Dorsolateral prefrontal cortex (tissue), 120 donors: ENCODE measurements at regions of chr19 and their contacts with region 1.

Region 1: GRCh38 chr19:14136509-14137281 is at the start of gene ASF1B:
- DNase-seq: peak; percentile 96 to 100 (median 99)
- H3K4me3 ChIP-seq: peak within 1 kb of the TSS; percentile 56 to 96 (median 83)
- H3K27ac ChIP-seq: peak within 1 kb of the TSS in 58 of 59 donors; percentile 40 to 96 (median 88)
- H3K27me3 ChIP-seq: no peaks in the 10 kb centered on the region
- CTCF ChIP-seq: peak; percentile 88 to 100 (median 98)
- total RNA-seq, gene ASF1B: 0.22 to 2.4 (median 0.63) TPM in 55 of 120 experiments, not detected in the others

Region 2: DNA sequence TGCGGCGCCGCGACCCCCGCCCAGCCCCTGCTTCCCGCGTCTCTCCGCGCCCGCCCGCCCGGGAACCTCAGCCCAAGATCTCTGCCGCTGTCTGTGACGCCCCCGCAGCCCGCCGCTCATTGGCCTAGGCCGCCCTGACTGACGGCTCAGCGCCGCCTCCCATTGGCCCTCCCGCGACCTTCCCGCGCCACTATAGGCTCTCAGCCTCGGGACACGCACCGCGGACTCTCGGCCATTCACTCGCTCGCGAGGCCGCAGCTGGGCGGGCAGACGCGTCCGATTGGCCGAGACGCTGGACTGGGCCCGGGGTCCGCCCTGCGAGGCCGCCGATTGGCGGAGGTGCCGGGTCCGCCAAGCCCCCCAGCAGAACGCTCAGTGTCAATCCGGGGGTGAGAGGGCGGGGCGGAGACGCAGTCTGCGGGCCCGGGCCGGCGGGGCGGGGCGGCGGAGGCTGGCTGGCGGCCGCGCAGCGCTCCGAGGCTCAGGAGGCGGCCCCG is 19.0 kb before region 1 on chr19 and contains the start of gene PRKACA:
- intact Hi-C with region 1: loop called (anchors 1 kb)
- DNase-seq: peak; percentile 98 to 100 (median 100)
- H3K4me3 ChIP-seq: peak within 1 kb of the TSS; percentile 65 to 94 (median 84)
- H3K27ac ChIP-seq: peak within 1 kb of the TSS; percentile 94 to 100 (median 99)
- H3K27me3 ChIP-seq: no peaks in the 10 kb centered on the region
- CTCF ChIP-seq: no peak
- total RNA-seq, gene PRKACA: 87.9 to 222 (median 163) TPM

Region 3: GRCh38 chr19:14405758-14406644 is 269.3 kb after region 1 on chr19:
- intact Hi-C with region 1: loop called (anchors 5 kb)
- DNase-seq: peak; percentile 83 to 95 (median 89)
- H3K4me3 ChIP-seq: peak overlapping the region; percentile 16 to 69 (median 51)
- H3K27ac ChIP-seq: peak overlapping the region in 56 of 59 donors; percentile 14 to 89 (median 74)
- H3K27me3 ChIP-seq: no peaks in the 10 kb centered on the region
- CTCF ChIP-seq: peak; percentile 64 to 99 (median 95)

Region 4: GRCh38 chr19:14472202-14472938 is 335.7 kb after region 1 on chr19:
- intact Hi-C with region 1: loop called (anchors 5 kb)
- DNase-seq: peak in 9 of 10 donors; percentile 47 to 74 (median 61)
- H3K4me3 ChIP-seq: peak overlapping the region in 46 of 59 donors; percentile 2 to 47 (median 27)
- H3K27ac ChIP-seq: peak overlapping the region in 4 of 59 donors; percentile 15 to 57 (median 22)
- H3K27me3 ChIP-seq: peaks cover 0 to 14% (median 0%) of the 10 kb centered on the region in 45 donors
- CTCF ChIP-seq: peak; percentile 71 to 99 (median 96)

Region 5: DNA sequence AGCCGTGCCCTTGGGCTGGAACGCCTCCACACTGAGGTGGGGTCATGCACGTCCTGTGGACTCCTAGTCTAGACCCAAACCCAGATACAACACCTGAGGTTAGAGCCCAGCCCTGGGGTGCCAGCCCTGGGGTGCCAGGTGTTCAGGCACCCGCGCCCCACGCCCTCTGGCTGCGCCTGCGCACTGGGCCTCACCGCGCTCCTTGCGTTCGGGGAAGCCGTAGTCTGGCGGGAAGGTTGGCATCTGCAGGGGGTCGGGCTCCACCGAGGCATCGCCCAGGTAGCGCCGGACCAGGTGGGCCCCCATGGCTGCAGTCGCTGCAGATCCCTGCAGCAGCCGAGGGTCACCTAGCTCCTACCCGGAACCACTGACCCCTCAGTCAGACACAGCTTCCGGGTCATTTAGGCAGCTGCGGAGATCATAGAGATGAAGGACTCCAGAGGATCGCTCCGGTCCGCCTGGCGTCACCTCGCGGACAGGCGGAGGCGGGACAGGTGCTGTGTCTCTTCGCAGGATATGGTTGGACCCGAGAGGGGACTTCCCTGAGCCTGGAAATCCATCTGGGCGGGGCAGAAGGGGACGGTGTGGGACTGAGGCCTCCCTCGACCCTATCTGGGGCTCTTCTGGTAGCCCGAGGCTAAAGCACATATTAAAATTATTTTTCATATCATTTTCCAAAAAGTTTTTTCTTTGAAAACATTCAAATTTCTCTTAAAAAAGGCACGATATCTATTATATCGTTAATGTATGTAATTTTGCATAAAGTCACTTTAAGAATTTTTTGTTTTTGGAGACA is 435.2 kb after region 1 on chr19 and contains the start of gene NDUFB7:
- intact Hi-C with region 1: loop called in 1 of 2 experiments (anchors 5 kb)
- DNase-seq: peak; percentile 87 to 97 (median 95)
- H3K4me3 ChIP-seq: peak within 1 kb of the TSS; percentile 61 to 100 (median 93)
- H3K27ac ChIP-seq: peak within 1 kb of the TSS; percentile 51 to 99 (median 90)
- H3K27me3 ChIP-seq: no peaks in the 10 kb centered on the region
- CTCF ChIP-seq: peak; percentile 82 to 100 (median 97)
- total RNA-seq, gene NDUFB7: 107 to 236 (median 166) TPM